ENCODE measurements at regions of chr6 and their contacts with region 1.

Region 1: DNA sequence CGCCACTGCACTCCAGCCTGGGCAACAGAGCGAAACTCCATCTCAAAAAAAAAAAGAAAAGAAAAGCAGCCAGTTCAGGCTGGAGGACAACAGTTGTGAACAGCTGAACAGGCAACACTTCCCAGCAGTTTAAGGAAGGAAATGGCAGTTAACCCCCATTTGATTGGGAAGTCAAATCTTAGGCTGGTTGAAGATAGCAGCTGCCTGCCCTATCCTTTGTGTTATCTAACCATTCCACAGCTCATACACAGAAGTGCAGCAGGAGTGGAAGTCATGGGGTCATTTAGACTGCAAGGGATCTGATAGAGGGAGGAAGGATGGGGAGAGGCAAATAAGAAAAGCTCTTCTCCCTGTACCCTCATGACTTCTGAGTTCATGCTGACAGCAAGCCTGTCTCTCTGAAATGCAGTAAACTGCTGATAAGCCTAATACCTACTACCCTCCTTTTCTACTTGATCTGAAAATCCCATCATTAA is 35.3 kb downstream of the KCTD20 start:
- DNase-seq: no peak
- ATAC-seq: no peak
- H3K4me3 ChIP-seq: no peak overlapping the region
- H3K4me3 Mint-ChIP-seq: no peak overlapping the region
- H3K27ac ChIP-seq: no peak overlapping the region
- H3K27ac Mint-ChIP-seq: no peak overlapping the region
- H3K4me1 ChIP-seq: no peaks in the 10 kb centered on the region
- H3K4me1 Mint-ChIP-seq: peaks cover 17% of the 10 kb centered on the region
- H3K27me3 ChIP-seq: no peaks in the 10 kb centered on the region
- H3K27me3 Mint-ChIP-seq: no peaks in the 10 kb centered on the region
- CTCF ChIP-seq: no peak

Region 2: DNA sequence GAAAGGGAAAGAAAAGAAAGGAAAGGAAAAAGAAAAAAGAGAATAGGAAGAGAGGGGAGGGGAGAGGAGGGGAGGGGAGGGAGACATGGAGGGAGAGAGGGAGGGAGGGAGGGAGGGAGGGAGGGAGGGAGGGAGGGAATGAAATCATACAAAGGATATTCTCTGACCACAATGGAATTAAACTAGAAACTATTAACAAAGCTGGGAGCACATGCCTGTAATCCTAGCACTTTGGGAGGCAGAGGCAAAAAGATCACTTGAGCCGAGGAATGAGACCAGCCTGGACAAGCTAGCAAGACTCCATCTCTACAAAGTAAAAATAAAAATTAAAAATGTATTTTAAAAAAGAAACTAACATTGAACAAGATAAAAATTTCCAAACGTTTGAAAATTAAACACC is 1844.3 kb before region 1 on chr6:
- CTCF ChIA-PET with region 1: no interaction called
- POLR2A ChIA-PET with region 1: interaction called, 13 read pairs
- intact Hi-C with region 1: no loop called
- DNase-seq: no peak
- ATAC-seq: no peak
- H3K4me3 ChIP-seq: no peak overlapping the region
- H3K4me3 Mint-ChIP-seq: no peak overlapping the region
- H3K27ac ChIP-seq: no peak overlapping the region
- H3K27ac Mint-ChIP-seq: no peak overlapping the region
- H3K4me1 ChIP-seq: peaks cover 3 to 8% of the 10 kb centered on the region in 2 donors
- H3K4me1 Mint-ChIP-seq: peaks cover 29% of the 10 kb centered on the region
- H3K27me3 ChIP-seq: no peaks in the 10 kb centered on the region
- H3K27me3 Mint-ChIP-seq: no peaks in the 10 kb centered on the region
- CTCF ChIP-seq: no peak

Region 3: GRCh38 chr6:35850208-35850607 is 627.9 kb before region 1 on chr6:
- CTCF ChIA-PET with region 1: no interaction called
- POLR2A ChIA-PET with region 1: no interaction called
- intact Hi-C with region 1: no loop called
- DNase-seq: no peak
- ATAC-seq: no peak
- H3K4me3 ChIP-seq: no peak overlapping the region
- H3K4me3 Mint-ChIP-seq: no peak overlapping the region
- H3K27ac ChIP-seq: no peak overlapping the region
- H3K27ac Mint-ChIP-seq: no peak overlapping the region
- H3K4me1 ChIP-seq: no peaks in the 10 kb centered on the region
- H3K4me1 Mint-ChIP-seq: no peaks in the 10 kb centered on the region
- H3K27me3 ChIP-seq: no peaks in the 10 kb centered on the region
- H3K27me3 Mint-ChIP-seq: no peaks in the 10 kb centered on the region
- CTCF ChIP-seq: no peak

Region 4: DNA sequence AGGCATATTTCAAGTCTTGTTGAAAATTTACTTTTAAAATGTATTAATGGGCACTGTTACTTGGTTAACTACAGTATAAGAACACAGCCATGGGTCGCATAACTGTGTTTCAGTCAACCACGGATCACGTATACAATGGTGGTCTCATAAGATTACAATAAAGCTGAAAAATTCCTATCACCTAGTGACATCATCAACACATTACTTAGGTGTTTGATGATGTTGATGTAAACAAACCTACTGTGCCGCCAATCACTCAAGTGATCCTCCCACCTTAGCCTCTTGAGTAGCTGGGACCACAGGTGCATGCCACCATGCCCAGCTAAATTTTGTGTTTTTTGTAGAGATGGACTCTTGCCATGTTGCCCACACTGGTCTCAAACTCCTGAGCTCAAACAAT is 73.9 kb before region 1 on chr6:
- CTCF ChIA-PET with region 1: no interaction called
- POLR2A ChIA-PET with region 1: no interaction called
- intact Hi-C with region 1: no loop called
- DNase-seq: no peak
- ATAC-seq: no peak
- H3K4me3 ChIP-seq: no peak overlapping the region
- H3K4me3 Mint-ChIP-seq: no peak overlapping the region
- H3K27ac ChIP-seq: no peak overlapping the region
- H3K27ac Mint-ChIP-seq: no peak overlapping the region
- H3K4me1 ChIP-seq: no peaks in the 10 kb centered on the region
- H3K4me1 Mint-ChIP-seq: peaks cover 4% of the 10 kb centered on the region
- H3K27me3 ChIP-seq: no peaks in the 10 kb centered on the region
- H3K27me3 Mint-ChIP-seq: peaks cover 27% of the 10 kb centered on the region
- CTCF ChIP-seq: no peak

Region 5: DNA sequence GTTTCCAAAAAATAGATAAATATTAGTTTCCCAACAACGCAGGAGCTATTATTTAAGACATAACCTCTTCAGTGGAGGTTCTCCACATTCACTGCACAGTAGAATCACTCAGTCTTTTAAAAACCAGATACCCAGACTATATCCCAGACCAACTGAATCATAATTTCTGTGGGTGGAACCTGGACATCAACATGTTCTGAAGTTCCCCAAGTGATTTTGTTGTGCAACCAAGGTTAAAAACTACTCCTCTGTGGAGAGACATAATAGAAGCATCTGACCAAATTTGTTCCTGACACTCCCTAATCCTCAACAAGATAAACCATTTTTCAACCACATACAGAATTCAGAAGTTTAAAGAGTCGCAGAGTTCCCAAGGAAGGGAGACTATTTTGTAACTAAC is 26.9 kb after region 1 on chr6:
- CTCF ChIA-PET with region 1: no interaction called
- POLR2A ChIA-PET with region 1: no interaction called
- intact Hi-C with region 1: no loop called
- DNase-seq: no peak
- ATAC-seq: no peak
- H3K4me3 ChIP-seq: no peak overlapping the region
- H3K4me3 Mint-ChIP-seq: no peak overlapping the region
- H3K27ac ChIP-seq: no peak overlapping the region
- H3K27ac Mint-ChIP-seq: no peak overlapping the region
- H3K4me1 ChIP-seq: no peaks in the 10 kb centered on the region
- H3K4me1 Mint-ChIP-seq: peaks cover 1% of the 10 kb centered on the region
- H3K27me3 ChIP-seq: no peaks in the 10 kb centered on the region
- H3K27me3 Mint-ChIP-seq: no peaks in the 10 kb centered on the region
- CTCF ChIP-seq: no peak

Region 6: DNA sequence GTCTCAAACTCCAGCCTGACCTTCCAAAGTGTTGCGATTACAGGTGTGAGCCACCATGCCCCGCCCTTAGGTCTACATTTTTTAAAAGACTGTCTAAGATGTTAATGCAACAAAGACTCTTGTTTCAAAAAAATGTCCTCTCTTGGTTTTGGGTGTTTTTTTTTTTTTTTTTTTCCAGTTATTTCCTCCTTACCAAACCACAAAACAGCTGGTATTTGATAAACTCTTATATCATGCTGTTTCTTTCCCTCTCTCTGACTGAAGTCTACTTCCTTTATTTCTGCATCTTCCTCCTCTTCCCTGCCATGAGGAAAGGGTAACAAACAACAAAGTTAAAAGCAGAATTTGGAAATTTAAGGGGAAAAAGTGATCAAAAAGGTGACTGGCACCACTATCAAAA is 48.0 kb after region 1 on chr6:
- CTCF ChIA-PET with region 1: no interaction called
- POLR2A ChIA-PET with region 1: no interaction called
- intact Hi-C with region 1: loop called (anchors 10 kb)
- DNase-seq: no peak
- ATAC-seq: no peak
- H3K4me3 ChIP-seq: no peak overlapping the region
- H3K4me3 Mint-ChIP-seq: no peak overlapping the region
- H3K27ac ChIP-seq: no peak overlapping the region
- H3K27ac Mint-ChIP-seq: peak overlapping the region; percentile 15
- H3K4me1 ChIP-seq: peaks cover 0 to 3% of the 10 kb centered on the region in 2 donors
- H3K4me1 Mint-ChIP-seq: peaks cover 9% of the 10 kb centered on the region
- H3K27me3 ChIP-seq: no peaks in the 10 kb centered on the region
- H3K27me3 Mint-ChIP-seq: no peaks in the 10 kb centered on the region
- CTCF ChIP-seq: no peak